Activated B cell treated with CpG ODN at 0.5 μM for 24 hours (primary cell): ENCODE measurements at regions of chr1 and their contacts with region 1.

Region 1: DNA sequence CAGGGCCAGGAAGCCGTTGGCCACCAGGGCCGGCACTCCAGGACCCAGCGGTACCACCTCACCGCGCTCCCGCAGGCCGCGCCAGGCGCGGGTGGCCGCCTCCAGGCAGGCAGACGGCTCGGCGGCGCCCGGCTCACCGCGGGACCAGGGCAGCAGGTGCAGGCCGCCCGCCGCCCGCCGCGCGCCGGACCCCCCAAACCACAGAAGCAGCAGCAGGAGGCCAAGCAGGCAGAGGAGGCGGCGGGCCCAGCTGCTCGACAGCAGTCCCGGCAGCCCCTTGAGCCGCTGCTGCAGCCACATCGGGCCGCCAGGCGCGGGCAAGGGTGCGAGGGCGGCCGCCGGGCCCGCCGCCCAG is 312 bp downstream of the KIAA2013 start:
- DNase-seq: no peak
- ATAC-seq: peak; percentile 3
- H3K4me3 Mint-ChIP-seq: no peak overlapping the region
- H3K27ac Mint-ChIP-seq: no peak overlapping the region
- H3K4me1 Mint-ChIP-seq: peaks cover 42% of the 10 kb centered on the region
- H3K27me3 Mint-ChIP-seq: no peaks in the 10 kb centered on the region
- CTCF ChIP-seq: no peak

Region 2: DNA sequence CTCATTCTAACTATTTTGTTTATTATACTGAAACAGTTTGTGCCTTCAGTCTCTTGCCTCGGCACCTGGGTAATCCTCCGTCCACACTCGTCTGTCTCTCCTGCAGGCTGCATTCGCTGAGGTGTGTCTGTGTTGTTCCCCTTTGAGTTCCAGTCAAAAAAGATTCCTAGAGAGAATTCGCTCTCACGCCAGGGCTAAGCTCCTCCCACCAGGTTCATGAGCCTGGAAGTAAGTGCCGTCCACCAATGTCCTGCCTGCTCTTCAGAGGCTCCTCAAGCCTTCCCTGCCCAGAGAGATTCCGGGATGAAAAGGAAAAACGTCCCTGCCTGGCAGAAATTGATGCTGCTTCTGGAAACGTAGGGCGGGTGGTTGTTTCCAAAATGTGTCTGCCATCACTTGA is 12.6 kb before region 1 on chr1:
- CTCF ChIA-PET with region 1: interaction called, 3 read pairs
- POLR2A ChIA-PET with region 1: interaction called, 184 read pairs
- intact Hi-C with region 1: loop called (anchors 1 kb)
- DNase-seq: no peak
- ATAC-seq: no peak
- H3K4me3 Mint-ChIP-seq: no peak overlapping the region
- H3K27ac Mint-ChIP-seq: no peak overlapping the region
- H3K4me1 Mint-ChIP-seq: peaks cover 20% of the 10 kb centered on the region
- H3K27me3 Mint-ChIP-seq: no peaks in the 10 kb centered on the region
- CTCF ChIP-seq: no peak

Region 3: GRCh38 chr1:11990303-11991032 is 64.6 kb after region 1 on chr1:
- CTCF ChIA-PET with region 1: no interaction called
- POLR2A ChIA-PET with region 1: no interaction called
- intact Hi-C with region 1: no loop called
- DNase-seq: no peak
- ATAC-seq: no peak
- H3K4me3 Mint-ChIP-seq: no peak overlapping the region
- H3K27ac Mint-ChIP-seq: no peak overlapping the region
- H3K4me1 Mint-ChIP-seq: peaks cover 3% of the 10 kb centered on the region
- H3K27me3 Mint-ChIP-seq: no peaks in the 10 kb centered on the region
- CTCF ChIP-seq: no peak